CD8-positive, alpha-beta T cell (primary cell): ENCODE measurements at regions of chr16 and their contacts with region 1.

Region 1: DNA sequence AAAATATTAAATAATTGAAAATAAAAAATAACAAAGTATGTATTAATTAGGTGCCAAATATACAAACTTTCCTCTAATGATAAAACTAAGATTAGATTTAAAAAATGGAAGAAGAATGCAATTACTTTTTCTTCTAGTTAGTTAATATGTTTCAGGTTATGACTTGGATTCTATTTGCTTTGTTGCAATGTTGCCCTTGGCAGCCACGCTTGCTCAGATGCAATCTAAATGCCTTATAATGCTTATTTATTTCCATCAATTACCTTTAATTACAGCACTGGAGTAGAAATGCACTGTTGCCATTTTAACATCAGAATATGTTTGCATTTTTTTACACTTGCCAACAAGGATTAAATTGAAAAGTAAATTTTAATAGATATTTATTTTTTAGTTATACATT is 263.9 kb downstream of the CNTNAP4 start:
- DNase-seq: no peak
- ATAC-seq: no peak
- H3K4me3 ChIP-seq: no peak overlapping the region
- H3K4me3 Mint-ChIP-seq: no peak overlapping the region
- H3K27ac ChIP-seq: no peak overlapping the region
- H3K27ac Mint-ChIP-seq: no peak overlapping the region
- H3K4me1 ChIP-seq: no peaks in the 10 kb centered on the region
- H3K4me1 Mint-ChIP-seq: no peaks in the 10 kb centered on the region
- H3K27me3 ChIP-seq: no peaks in the 10 kb centered on the region
- H3K27me3 Mint-ChIP-seq: no peaks in the 10 kb centered on the region
- CTCF ChIP-seq: no peak

Region 2: DNA sequence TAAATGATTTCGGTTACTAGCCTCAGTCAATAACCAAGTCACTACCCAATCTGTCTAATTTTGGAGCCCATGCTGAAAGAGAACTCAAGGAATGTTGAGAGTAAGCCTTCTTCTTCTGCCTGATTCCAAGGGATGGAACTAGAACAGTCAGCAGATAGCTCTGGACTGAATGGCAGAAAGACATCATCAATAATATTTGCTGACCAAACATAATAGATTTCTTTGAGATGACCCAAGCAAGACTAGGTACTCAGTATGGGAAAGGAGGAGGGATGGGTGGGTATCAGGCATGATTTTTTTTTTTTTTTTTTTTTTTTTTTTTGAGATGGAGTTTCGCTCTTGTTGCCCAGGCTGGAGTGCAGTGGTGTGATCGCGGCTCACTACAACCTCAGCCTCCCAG is 66.2 kb after region 1 on chr16:
- CTCF ChIA-PET with region 1: no interaction called
- POLR2A ChIA-PET with region 1: no interaction called
- intact Hi-C with region 1: loop called in 1 of 2 experiments (anchors 10 kb)
- DNase-seq: no peak
- ATAC-seq: no peak
- H3K4me3 ChIP-seq: no peak overlapping the region
- H3K4me3 Mint-ChIP-seq: no peak overlapping the region
- H3K27ac ChIP-seq: no peak overlapping the region
- H3K27ac Mint-ChIP-seq: no peak overlapping the region
- H3K4me1 ChIP-seq: no peaks in the 10 kb centered on the region
- H3K4me1 Mint-ChIP-seq: no peaks in the 10 kb centered on the region
- H3K27me3 ChIP-seq: no peaks in the 10 kb centered on the region
- H3K27me3 Mint-ChIP-seq: no peaks in the 10 kb centered on the region
- CTCF ChIP-seq: no peak